B cell (primary cell): ENCODE measurements at regions of chr6 and their contacts with region 1.

Region 1: GRCh38 chr6:10534419-10534762 is 13.2 kb downstream of the GCNT2 start:
- DNase-seq: peak; percentile 77
- ATAC-seq: peak; percentile 65
- H3K4me3 ChIP-seq: peak overlapping the region in 2 of 5 experiments; percentile 9 to 63
- H3K4me3 Mint-ChIP-seq: peak overlapping the region; percentile 74
- H3K27ac ChIP-seq: peak overlapping the region; percentile 56 to 86
- H3K27ac Mint-ChIP-seq: peak overlapping the region; percentile 95
- H3K4me1 ChIP-seq: peaks cover 67 to 76% of the 10 kb centered on the region in 2 donors
- H3K4me1 Mint-ChIP-seq: peaks cover 80% of the 10 kb centered on the region
- H3K27me3 ChIP-seq: no peaks in the 10 kb centered on the region
- H3K27me3 Mint-ChIP-seq: no peaks in the 10 kb centered on the region
- CTCF ChIP-seq: no peak

Region 2: GRCh38 chr6:10694302-10695085 is 160.1 kb after region 1 on chr6 and contains the starts of genes C6orf52 and PAK1IP1:
- CTCF ChIA-PET with region 1: no interaction called
- POLR2A ChIA-PET with region 1: interaction called, 12 read pairs
- intact Hi-C with region 1: loop called (anchors 1 kb)
- DNase-seq: peak; percentile 98
- ATAC-seq: peak; percentile 94
- H3K4me3 ChIP-seq: peak within 1 kb of the TSS; percentile 73 to 97 (median 95)
- H3K4me3 Mint-ChIP-seq: peak within 1 kb of the TSS; percentile 97
- H3K27ac ChIP-seq: peak within 1 kb of the TSS; percentile 96 to 99
- H3K27ac Mint-ChIP-seq: peak within 1 kb of the TSS; percentile 100
- H3K4me1 ChIP-seq: peaks cover 16 to 28% of the 10 kb centered on the region in 2 donors
- H3K4me1 Mint-ChIP-seq: peaks cover 30% of the 10 kb centered on the region
- H3K27me3 ChIP-seq: no peaks in the 10 kb centered on the region
- H3K27me3 Mint-ChIP-seq: no peaks in the 10 kb centered on the region
- CTCF ChIP-seq: no peak
- total RNA-seq, gene C6orf52: 1.2 TPM in 1 of 2 replicates, not detected in the other
- total RNA-seq, gene PAK1IP1: 6.1 TPM in 2 replicates

Region 3: GRCh38 chr6:10747251-10747972 is 213.0 kb after region 1 on chr6 and contains the start of gene TMEM14B:
- CTCF ChIA-PET with region 1: interaction called, 4 read pairs
- POLR2A ChIA-PET with region 1: interaction called, 4 read pairs
- intact Hi-C with region 1: loop called (anchors 1 kb)
- DNase-seq: peak; percentile 99
- ATAC-seq: peak; percentile 98
- H3K4me3 ChIP-seq: peak within 1 kb of the TSS; percentile 64 to 89 (median 85)
- H3K4me3 Mint-ChIP-seq: peak within 1 kb of the TSS; percentile 95
- H3K27ac ChIP-seq: peak within 1 kb of the TSS; percentile 56 to 76
- H3K27ac Mint-ChIP-seq: peak within 1 kb of the TSS; percentile 91
- H3K4me1 ChIP-seq: peaks cover 17 to 25% of the 10 kb centered on the region in 2 donors
- H3K4me1 Mint-ChIP-seq: peaks cover 29% of the 10 kb centered on the region
- H3K27me3 ChIP-seq: no peaks in the 10 kb centered on the region
- H3K27me3 Mint-ChIP-seq: no peaks in the 10 kb centered on the region
- CTCF ChIP-seq: no peak
- total RNA-seq, gene TMEM14B: 53.0 and 58.5 TPM in 2 replicates

Region 4: GRCh38 chr6:11093589-11094410 is 559.4 kb after region 1 on chr6 and contains the start of gene SMIM13:
- CTCF ChIA-PET with region 1: no interaction called
- POLR2A ChIA-PET with region 1: no interaction called
- intact Hi-C with region 1: loop called (anchors 5 kb)
- DNase-seq: peak; percentile 96
- ATAC-seq: peak; percentile 90
- H3K4me3 ChIP-seq: peak within 1 kb of the TSS; percentile 65 to 95 (median 89)
- H3K4me3 Mint-ChIP-seq: peak within 1 kb of the TSS; percentile 97
- H3K27ac ChIP-seq: peak within 1 kb of the TSS; percentile 91 to 93
- H3K27ac Mint-ChIP-seq: peak within 1 kb of the TSS; percentile 97
- H3K4me1 ChIP-seq: peaks cover 12% of the 10 kb centered on the region in 2 donors
- H3K4me1 Mint-ChIP-seq: peaks cover 22% of the 10 kb centered on the region
- H3K27me3 ChIP-seq: no peaks in the 10 kb centered on the region
- H3K27me3 Mint-ChIP-seq: peaks cover 3% of the 10 kb centered on the region
- CTCF ChIP-seq: peak; percentile 74
- total RNA-seq, gene SMIM13: 5.5 and 7.0 TPM in 2 replicates

Region 5: DNA sequence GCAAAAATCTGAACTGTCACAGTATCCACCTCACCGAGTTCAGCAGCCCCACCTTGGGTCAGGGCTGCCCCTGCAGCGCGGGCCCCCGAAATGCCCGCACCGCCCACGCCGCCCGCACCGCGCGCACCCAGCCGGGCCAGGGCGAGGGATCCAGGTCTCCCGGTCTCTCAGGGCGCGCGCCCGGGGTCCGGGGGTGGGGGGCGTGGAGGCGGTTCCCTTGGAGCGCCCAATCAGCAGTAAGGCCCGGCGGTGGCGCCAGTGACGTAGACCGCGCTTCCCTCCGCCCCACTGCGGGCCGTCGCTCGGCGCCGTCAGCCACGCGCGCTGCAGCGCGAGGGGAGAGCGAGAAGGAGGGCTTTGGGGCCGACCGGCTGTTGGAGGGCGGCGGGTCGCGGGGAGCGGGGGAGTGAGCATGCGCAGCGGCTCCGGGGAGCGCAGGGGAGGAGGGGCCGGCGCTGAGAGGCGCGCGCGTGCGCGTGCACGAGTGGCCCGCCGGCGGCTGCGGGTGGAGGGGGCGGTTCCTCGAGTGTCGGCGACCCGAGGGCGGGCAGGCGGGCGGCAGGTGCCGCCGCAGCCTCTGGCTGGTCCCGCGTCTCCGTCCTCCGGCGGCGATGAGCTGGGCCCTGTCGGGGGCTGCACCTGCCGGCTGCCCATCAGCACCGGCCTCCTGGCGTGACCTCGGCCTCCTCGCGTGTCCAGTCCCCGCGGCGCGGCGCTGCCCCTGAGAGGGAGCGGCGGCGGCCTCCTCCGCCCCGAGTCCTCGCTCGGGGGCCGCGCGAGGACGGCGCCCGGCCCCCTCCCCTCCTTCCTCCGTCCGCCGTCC is 1003.0 kb after region 1 on chr6 and contains the start of gene TMEM170B:
- CTCF ChIA-PET with region 1: no interaction called
- POLR2A ChIA-PET with region 1: no interaction called
- intact Hi-C with region 1: loop called (anchors 5 kb)
- DNase-seq: peak; percentile 99
- ATAC-seq: peak; percentile 93
- H3K4me3 ChIP-seq: peak within 1 kb of the TSS; percentile 68 to 83 (median 80)
- H3K4me3 Mint-ChIP-seq: peak within 1 kb of the TSS; percentile 87
- H3K27ac ChIP-seq: peak within 1 kb of the TSS; percentile 19 to 83
- H3K27ac Mint-ChIP-seq: peak within 1 kb of the TSS; percentile 92
- H3K4me1 ChIP-seq: peaks cover 8 to 11% of the 10 kb centered on the region in 2 donors
- H3K4me1 Mint-ChIP-seq: peaks cover 16% of the 10 kb centered on the region
- H3K27me3 ChIP-seq: no peaks in the 10 kb centered on the region
- H3K27me3 Mint-ChIP-seq: peaks cover 8% of the 10 kb centered on the region
- CTCF ChIP-seq: no peak
- total RNA-seq, gene TMEM170B: 3.2 and 3.4 TPM in 2 replicates